GM12878 (cell line): ENCODE measurements at regions of chr11 and their contacts with region 1.

Region 1: DNA sequence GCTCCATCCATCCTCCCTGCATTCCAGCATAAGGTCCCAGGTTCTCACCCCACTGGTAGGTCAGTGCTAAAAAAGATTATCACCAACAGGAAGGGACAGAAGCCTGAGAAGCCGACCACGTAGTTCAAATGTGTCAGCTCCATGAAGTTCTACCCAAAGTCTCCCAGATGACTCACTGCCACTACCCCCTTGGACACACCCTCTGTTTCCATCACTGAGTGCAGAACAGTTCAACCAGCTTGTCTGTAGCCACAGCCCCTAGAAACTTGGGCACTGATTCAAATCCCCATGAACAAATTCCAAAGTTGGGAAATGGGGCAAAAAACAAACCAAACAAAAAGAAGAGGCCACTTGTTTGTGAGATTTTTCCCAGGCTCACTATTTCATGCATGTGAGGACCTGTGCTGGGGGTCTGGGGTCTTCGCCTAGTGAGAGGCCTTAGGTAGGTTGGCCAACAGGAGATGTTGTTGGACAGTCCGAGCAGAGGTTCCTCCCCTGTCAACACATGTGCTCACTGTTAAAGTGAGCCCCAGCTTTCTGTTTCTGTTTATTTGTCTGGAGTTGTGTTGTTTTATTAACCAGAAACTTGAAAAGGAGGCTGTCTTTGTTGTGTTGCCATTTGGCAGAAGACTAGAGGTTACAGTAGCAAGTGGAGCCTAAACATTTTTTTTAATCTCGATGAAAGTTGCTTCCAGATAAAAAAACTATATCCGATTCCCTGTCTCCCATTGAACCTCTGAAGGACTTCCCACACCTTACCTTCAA is 24.2 kb upstream of the FLI1 start:
- DNase-seq: no peak
- ATAC-seq: no peak
- H3K4me3 ChIP-seq: no peak overlapping the region
- H3K27ac ChIP-seq: no peak overlapping the region
- H3K4me1 ChIP-seq: no peaks in the 10 kb centered on the region
- H3K27me3 ChIP-seq: no peaks in the 10 kb centered on the region; a peak in 1 of 4 replicates
- CTCF ChIP-seq: no peak
- EP300 ChIP-seq: no peak
- POLR2A ChIP-seq: no peak
- RAD21 ChIP-seq: no peak

Region 2: DNA sequence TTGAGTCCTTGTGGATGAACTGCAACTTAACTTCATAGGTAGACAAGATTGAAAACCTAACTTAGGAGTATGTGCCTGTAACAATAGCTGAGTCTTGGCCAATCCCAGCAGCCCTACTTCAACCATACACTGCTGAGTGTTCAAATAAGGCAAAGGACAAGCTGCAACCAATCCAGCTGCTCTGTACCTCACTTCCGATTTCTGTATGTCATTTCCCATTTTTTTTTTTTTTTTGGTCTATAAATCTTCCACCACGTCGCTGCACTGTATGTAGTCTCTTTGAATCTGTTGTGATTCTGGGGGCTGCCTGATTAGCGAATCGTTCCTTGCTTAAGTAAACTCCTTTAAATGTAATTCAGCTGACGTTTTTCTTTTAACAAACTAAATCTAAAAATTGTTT is 11.2 kb before region 1 on chr11:
- CTCF ChIA-PET with region 1: interaction called, 7 read pairs
- POLR2A ChIA-PET with region 1: interaction called, 3 read pairs
- RAD21 ChIA-PET with region 1: no interaction called
- SMC1A ChIA-PET with region 1: interaction called, 10 read pairs
- in situ Hi-C with region 1: no loop called
- intact Hi-C with region 1: no loop called
- DNase-seq: no peak
- ATAC-seq: peak; percentile 58
- H3K4me3 ChIP-seq: no peak overlapping the region
- H3K27ac ChIP-seq: no peak overlapping the region
- H3K4me1 ChIP-seq: no peaks in the 10 kb centered on the region
- H3K27me3 ChIP-seq: no peaks in the 10 kb centered on the region; a peak in 1 of 4 replicates
- CTCF ChIP-seq: no peak
- EP300 ChIP-seq: no peak
- POLR2A ChIP-seq: no peak
- RAD21 ChIP-seq: no peak